ENCODE measurements at regions of chr17 and their contacts with region 1.

Region 1: DNA sequence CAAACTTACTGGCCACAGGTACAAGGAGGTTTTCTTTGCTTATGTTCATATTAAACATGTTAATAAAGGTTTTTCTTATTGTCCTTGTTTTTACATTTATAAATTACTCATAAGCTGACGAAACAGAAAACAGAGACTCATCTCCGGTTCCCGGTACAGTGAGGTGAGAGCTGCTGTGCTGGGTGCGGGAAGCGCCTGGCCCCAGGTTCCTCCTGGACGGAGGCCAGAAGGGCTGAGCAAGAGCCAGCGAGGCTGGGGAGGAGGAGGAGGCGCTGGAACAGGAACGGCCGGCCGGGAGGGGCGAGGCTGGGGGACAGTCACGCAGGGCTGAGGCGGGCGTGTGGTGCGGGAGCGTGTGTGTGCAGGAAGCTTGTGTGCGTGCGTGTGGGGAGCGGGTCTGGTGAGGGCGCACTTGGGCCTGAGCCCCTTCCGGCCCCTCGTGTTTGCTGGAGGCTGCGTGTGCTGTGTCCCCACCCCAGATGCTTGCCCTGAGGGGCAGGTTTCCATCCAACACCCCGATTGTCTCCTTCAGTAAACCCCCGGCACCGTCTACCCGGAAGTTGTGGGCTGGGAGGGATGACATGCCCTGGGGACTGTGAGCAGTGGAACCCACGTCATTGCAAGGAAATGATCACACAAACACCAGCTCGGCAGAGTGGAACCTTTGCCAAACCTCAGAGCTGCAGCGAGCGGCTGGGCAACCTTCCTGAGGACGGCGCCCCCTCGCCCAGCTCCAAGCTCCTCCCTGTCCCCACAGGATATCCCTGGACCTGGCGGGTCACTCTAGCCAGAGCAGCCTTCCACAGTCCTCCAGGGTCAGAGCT is 19.5 kb downstream of the CD7 start:
- DNase-seq: peak; percentile 95
- H3K4me3 Mint-ChIP-seq: peak overlapping the region; percentile 92
- H3K27ac Mint-ChIP-seq: peak overlapping the region; percentile 100
- H3K4me1 Mint-ChIP-seq: peaks cover 89% of the 10 kb centered on the region
- H3K27me3 Mint-ChIP-seq: peaks cover 3% of the 10 kb centered on the region

Region 2: GRCh38 chr17:82226186-82226813 is 71.6 kb before region 1 on chr17:
- CTCF ChIA-PET with region 1: no interaction called
- DNase-seq: no peak
- H3K4me3 Mint-ChIP-seq: no peak overlapping the region
- H3K27ac Mint-ChIP-seq: peak overlapping the region; percentile 65
- H3K4me1 Mint-ChIP-seq: peaks cover 12% of the 10 kb centered on the region
- H3K27me3 Mint-ChIP-seq: peaks cover 8% of the 10 kb centered on the region

Region 3: DNA sequence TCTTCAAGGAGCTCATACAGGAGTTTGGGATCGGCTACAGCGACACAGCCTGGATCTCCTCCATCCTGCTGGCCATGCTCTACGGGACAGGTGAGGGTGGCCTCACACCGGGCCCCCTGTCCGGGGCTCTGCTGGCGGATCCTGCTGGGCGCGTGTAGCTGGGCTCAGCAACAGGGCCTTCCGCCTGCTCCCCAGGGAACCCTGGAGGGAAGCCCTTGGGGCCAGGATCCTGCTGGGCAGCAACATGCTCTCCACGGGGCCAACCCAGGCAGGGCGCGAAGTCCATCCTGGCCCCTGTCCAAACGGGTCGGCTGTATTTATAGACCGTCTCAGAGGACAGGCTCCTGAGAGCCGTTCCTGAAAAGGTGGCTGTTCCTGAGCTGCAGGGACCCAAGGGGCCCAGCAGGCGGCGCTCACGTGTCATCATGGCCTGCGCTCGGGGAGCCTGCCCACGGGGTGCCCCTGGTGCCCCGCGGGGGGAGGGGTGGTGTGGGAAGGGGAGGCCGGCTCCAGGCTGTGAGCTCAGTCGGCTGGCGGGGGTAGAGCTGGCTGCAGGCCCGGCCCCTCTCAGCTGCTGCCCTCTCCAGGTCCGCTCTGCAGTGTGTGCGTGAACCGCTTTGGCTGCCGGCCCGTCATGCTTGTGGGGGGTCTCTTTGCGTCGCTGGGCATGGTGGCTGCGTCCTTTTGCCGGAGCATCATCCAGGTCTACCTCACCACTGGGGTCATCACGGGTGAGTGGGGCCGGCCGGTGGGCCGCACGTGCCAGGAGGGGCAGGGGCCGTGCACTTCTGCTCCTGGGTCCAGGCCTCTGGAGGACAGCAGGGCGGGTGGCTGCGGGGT is 61.6 kb before region 1 on chr17:
- CTCF ChIA-PET with region 1: interaction called, 12 read pairs
- DNase-seq: peak; percentile 79
- H3K4me3 Mint-ChIP-seq: no peak overlapping the region
- H3K27ac Mint-ChIP-seq: peak overlapping the region; percentile 70
- H3K4me1 Mint-ChIP-seq: peaks cover 66% of the 10 kb centered on the region
- H3K27me3 Mint-ChIP-seq: no peaks in the 10 kb centered on the region

Region 4: DNA sequence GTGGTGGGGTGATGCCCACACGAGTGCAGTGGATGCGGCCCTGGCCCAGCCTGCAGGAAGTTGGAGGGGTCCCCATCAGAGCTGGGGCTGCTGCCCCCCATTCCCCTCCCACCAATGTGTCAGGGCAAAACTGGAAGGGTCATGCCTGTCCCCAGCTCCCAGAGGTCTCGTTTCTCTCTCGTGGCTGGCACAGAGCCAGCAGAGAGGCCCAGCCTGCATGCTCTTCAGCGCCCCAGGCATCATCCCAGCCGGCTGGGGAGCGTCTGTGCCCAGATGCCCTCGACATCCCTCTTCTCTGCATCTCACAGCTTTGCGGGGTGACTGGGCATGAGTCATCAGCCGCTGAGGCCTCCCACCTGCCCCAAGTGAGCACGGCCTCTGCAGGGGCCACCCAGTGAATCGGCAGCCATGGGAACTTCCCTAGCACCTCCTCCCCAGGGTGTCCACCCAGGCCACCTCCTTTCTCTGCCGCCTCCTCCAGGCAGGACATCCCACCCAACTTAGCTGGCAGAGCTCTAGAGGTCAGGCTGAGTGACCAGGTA is 14.6 kb before region 1 on chr17:
- CTCF ChIA-PET with region 1: no interaction called
- DNase-seq: no peak
- H3K4me3 Mint-ChIP-seq: no peak overlapping the region
- H3K27ac Mint-ChIP-seq: no peak overlapping the region
- H3K4me1 Mint-ChIP-seq: peaks cover 13% of the 10 kb centered on the region
- H3K27me3 Mint-ChIP-seq: peaks cover 50% of the 10 kb centered on the region

Region 5: DNA sequence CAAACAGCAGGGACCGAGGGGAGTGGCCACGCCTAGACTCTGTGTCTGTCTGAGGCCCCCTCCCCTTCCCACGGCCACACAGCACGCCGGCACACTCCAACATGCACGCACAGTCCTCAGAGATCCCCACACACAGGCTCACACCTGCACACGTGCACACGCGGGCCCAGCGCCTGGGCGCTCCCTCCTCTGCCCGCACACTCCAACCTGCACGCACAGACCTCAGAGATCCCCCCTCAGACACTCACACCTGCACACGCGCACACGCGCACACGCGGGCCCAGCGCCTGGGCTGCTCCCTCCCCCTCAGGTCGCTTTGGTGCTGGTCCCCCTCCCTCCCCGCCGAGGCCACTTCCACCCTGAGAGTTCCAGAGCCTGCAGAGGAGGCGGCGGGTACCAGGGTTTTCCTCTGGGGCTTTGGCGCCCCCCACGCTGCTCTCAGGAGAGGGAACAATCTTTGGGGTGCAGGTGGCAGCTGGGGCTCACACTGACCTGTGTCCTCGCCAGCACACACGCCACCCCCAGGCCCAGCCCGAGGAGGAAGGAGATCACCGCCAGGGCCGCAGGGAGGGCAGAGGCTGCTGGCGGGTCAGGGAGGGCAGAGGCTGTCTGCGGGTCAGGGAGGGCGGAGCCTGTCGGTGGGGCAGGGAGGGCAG is 17.9 kb after region 1 on chr17:
- CTCF ChIA-PET with region 1: interaction called, 58 read pairs
- DNase-seq: peak; percentile 76
- H3K4me3 Mint-ChIP-seq: no peak overlapping the region
- H3K27ac Mint-ChIP-seq: peak overlapping the region; percentile 63
- H3K4me1 Mint-ChIP-seq: peaks cover 17% of the 10 kb centered on the region
- H3K27me3 Mint-ChIP-seq: no peaks in the 10 kb centered on the region

Region 6: GRCh38 chr17:82320956-82321927 is 23.3 kb after region 1 on chr17:
- CTCF ChIA-PET with region 1: interaction called, 58 read pairs
- DNase-seq: peak; percentile 82
- H3K4me3 Mint-ChIP-seq: peak overlapping the region; percentile 66
- H3K27ac Mint-ChIP-seq: peak overlapping the region; percentile 70
- H3K4me1 Mint-ChIP-seq: peaks cover 15% of the 10 kb centered on the region
- H3K27me3 Mint-ChIP-seq: peaks cover 8% of the 10 kb centered on the region

Region 7: GRCh38 chr17:82351716-82352488 is 54.0 kb after region 1 on chr17:
- CTCF ChIA-PET with region 1: interaction called, 12 read pairs
- DNase-seq: peak; percentile 89
- H3K4me3 Mint-ChIP-seq: no peak overlapping the region
- H3K27ac Mint-ChIP-seq: no peak overlapping the region
- H3K4me1 Mint-ChIP-seq: no peaks in the 10 kb centered on the region
- H3K27me3 Mint-ChIP-seq: peaks cover 68% of the 10 kb centered on the region

Region 8: GRCh38 chr17:82400830-82401229 is 102.9 kb after region 1 on chr17:
- CTCF ChIA-PET with region 1: no interaction called
- DNase-seq: peak; percentile 75
- H3K4me3 Mint-ChIP-seq: peak overlapping the region; percentile 66
- H3K27ac Mint-ChIP-seq: peak overlapping the region; percentile 77
- H3K4me1 Mint-ChIP-seq: peaks cover 22% of the 10 kb centered on the region
- H3K27me3 Mint-ChIP-seq: no peaks in the 10 kb centered on the region

Measured in activated naive CD4-positive, alpha-beta T cell treated with anti-CD3 and anti-CD28 coated beads, Interleukin-2, amount 10 ng/mL, durations not matched to agents 7 days and 5 days (primary cell).